GM12878 (cell line): ENCODE measurements at regions of chr19 and their contacts with region 1.

Region 1: DNA sequence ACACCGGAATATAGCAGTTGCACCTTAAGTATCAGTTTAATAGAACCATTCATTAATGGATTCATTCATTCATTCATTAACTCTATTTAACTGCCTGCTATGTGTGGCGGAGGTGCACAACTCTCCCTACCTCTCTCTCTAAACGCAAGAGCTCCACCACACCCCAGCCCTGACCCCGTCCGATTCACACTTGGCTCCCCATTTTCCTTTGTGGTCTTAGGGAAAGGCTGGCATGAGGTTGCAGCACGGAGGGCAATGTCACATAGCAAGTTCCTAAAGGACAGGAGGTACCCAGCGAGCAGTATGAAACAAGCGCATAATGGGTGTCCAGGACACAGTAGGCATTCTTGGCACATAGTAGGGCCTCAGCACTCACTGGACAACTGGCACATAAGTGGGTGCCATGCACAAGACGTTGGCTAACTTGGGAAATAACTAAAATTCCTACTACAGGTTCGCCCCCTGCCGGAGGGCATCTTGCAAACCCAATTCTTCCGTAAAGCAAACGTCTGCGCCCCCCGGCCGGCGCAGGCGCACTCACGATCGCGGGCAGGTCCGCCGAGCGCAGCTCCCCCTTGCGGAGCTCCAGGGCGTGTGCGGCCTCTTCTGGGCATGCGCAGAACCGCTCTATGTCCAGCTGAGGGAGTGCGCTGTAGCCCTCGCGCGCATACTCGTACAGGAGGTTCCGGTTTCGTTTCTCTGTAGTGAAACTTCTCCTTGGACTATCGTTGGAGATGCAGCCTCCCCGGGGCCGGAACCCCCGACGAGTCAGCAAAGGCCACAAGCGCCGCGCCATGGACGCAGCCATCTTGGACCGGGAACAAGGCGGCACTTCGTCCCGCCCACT is at the start of gene SARS2:
- DNase-seq: peak; percentile 79
- ATAC-seq: peak; percentile 72
- H3K4me3 ChIP-seq: peak within 1 kb of the TSS; percentile 98
- H3K27ac ChIP-seq: peak within 1 kb of the TSS; percentile 97
- H3K4me1 ChIP-seq: peaks cover 6% of the 10 kb centered on the region
- H3K27me3 ChIP-seq: no peaks in the 10 kb centered on the region
- CTCF ChIP-seq: peak; percentile 98 to 100 (median 99); a peak in 5 of 6 replicates
- EP300 ChIP-seq: peak in 1 of 2 experiments; percentile 27; a peak in 1 of 4 replicates
- POLR2A ChIP-seq: peak; percentile 86
- RAD21 ChIP-seq: peak; percentile 58
- polyA plus RNA-seq, gene SARS2: 2.6 to 7.8 TPM

Region 2: GRCh38 chr19:38544034-38544958 is 385.9 kb before region 1 on chr19:
- CTCF ChIA-PET with region 1: interaction called, 8 read pairs
- POLR2A ChIA-PET with region 1: interaction called, 4 read pairs
- RAD21 ChIA-PET with region 1: interaction called, 3 read pairs
- SMC1A ChIA-PET with region 1: interaction called, 12 read pairs
- in situ Hi-C with region 1: no loop called
- intact Hi-C with region 1: no loop called
- DNase-seq: peak; percentile 64
- ATAC-seq: peak; percentile 93
- H3K4me3 ChIP-seq: peak overlapping the region; percentile 25; the same call in 1 of the 2 replicates
- H3K27ac ChIP-seq: no peak overlapping the region
- H3K4me1 ChIP-seq: peaks cover 9% of the 10 kb centered on the region; the same call in 1 of the 2 replicates
- H3K27me3 ChIP-seq: no peaks in the 10 kb centered on the region
- CTCF ChIP-seq: peak; percentile 52 to 81 (median 69); a peak in 5 of 6 replicates
- EP300 ChIP-seq: no peak
- POLR2A ChIP-seq: no peak
- RAD21 ChIP-seq: peak; percentile 91

Region 3: GRCh38 chr19:38634757-38635482 is 295.2 kb before region 1 on chr19:
- CTCF ChIA-PET with region 1: interaction called, 26 read pairs
- POLR2A ChIA-PET with region 1: no interaction called
- RAD21 ChIA-PET with region 1: interaction called, 8 read pairs
- SMC1A ChIA-PET with region 1: interaction called, 7 read pairs
- in situ Hi-C with region 1: no loop called
- intact Hi-C with region 1: loop called (anchors 2 kb)
- DNase-seq: peak; percentile 32
- ATAC-seq: peak; percentile 73
- H3K4me3 ChIP-seq: no peak overlapping the region
- H3K27ac ChIP-seq: no peak overlapping the region; the same call in 1 of the 2 replicates
- H3K4me1 ChIP-seq: peaks cover 15% of the 10 kb centered on the region
- H3K27me3 ChIP-seq: no peaks in the 10 kb centered on the region
- CTCF ChIP-seq: peak; percentile 86 to 91 (median 88)
- EP300 ChIP-seq: no peak
- POLR2A ChIP-seq: 0 out of 2 replicates have a peak, but pooled peaks have one; percentile 27
- RAD21 ChIP-seq: peak; percentile 83

Region 4: DNA sequence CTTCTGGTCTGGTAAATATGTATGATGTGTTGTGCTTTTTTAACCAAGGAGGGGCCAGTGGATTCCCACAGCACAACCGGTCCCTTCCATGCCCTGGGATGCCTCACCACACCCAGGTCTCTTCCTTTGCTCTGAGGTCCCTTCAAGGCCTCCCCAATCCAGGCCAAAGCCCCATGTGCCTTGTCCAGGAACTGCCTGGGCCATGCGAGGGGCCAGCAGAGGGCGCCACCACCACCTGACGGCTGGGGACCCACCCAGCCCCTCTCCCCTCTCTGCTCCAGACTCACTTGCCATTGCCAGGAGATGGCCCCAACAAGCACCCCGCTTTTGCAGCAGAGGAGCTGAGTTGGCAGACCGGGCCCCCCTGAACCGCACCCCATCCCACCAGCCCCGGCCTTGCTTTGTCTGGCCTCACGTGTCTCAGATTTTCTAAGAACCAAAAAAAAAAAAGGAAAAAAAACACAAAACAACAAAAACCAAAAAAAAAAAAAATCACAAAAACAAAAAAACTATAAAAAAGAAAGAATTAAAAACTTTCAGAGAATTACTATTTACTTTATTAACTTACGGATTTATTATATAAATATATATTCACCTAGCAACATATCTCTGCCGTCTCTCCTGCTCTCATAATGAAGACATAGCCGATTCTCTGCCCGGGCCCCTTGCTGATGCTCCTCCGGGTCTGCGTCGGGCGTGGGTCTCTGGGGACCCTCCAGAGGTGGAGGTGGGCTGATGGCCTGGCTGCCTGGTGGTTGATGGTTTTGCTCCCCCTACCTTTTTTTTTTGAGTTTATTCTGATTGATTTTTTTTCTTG is 200.3 kb before region 1 on chr19:
- CTCF ChIA-PET with region 1: interaction called, 20 read pairs
- POLR2A ChIA-PET with region 1: interaction called, 5 read pairs
- RAD21 ChIA-PET with region 1: interaction called, 11 read pairs
- SMC1A ChIA-PET with region 1: interaction called, 4 read pairs
- in situ Hi-C with region 1: loop called (anchors 5 kb)
- intact Hi-C with region 1: loop called (anchors 1 kb)
- DNase-seq: no peak
- ATAC-seq: peak; percentile 92
- H3K4me3 ChIP-seq: no peak overlapping the region
- H3K27ac ChIP-seq: no peak overlapping the region
- H3K4me1 ChIP-seq: peaks cover 15% of the 10 kb centered on the region
- H3K27me3 ChIP-seq: no peaks in the 10 kb centered on the region
- CTCF ChIP-seq: peak; percentile 71 to 97 (median 79)
- EP300 ChIP-seq: no peak
- POLR2A ChIP-seq: no peak
- RAD21 ChIP-seq: peak; percentile 67

Region 5: GRCh38 chr19:38795549-38795948 is 134.6 kb before region 1 on chr19:
- CTCF ChIA-PET with region 1: no interaction called
- POLR2A ChIA-PET with region 1: no interaction called
- RAD21 ChIA-PET with region 1: no interaction called
- SMC1A ChIA-PET with region 1: no interaction called
- in situ Hi-C with region 1: no loop called
- intact Hi-C with region 1: no loop called
- DNase-seq: no peak
- ATAC-seq: no peak
- H3K4me3 ChIP-seq: no peak overlapping the region
- H3K27ac ChIP-seq: no peak overlapping the region
- H3K4me1 ChIP-seq: no peaks in the 10 kb centered on the region
- H3K27me3 ChIP-seq: no peaks in the 10 kb centered on the region
- CTCF ChIP-seq: no peak
- EP300 ChIP-seq: no peak
- POLR2A ChIP-seq: no peak
- RAD21 ChIP-seq: no peak

Region 6: GRCh38 chr19:38869856-38870607 is 60.1 kb before region 1 on chr19:
- CTCF ChIA-PET with region 1: interaction called, 7 read pairs
- POLR2A ChIA-PET with region 1: interaction called, 3 read pairs
- RAD21 ChIA-PET with region 1: interaction called, 5 read pairs
- SMC1A ChIA-PET with region 1: interaction called, 4 read pairs
- in situ Hi-C with region 1: no loop called
- intact Hi-C with region 1: loop called (anchors 5 kb)
- DNase-seq: no peak
- ATAC-seq: peak; percentile 92
- H3K4me3 ChIP-seq: peak overlapping the region; percentile 52; the same call in 1 of the 2 replicates
- H3K27ac ChIP-seq: peak overlapping the region; percentile 46; the same call in 1 of the 2 replicates
- H3K4me1 ChIP-seq: peaks cover 23% of the 10 kb centered on the region
- H3K27me3 ChIP-seq: no peaks in the 10 kb centered on the region
- CTCF ChIP-seq: peak; percentile 90 to 95 (median 94); a peak in 5 of 6 replicates
- EP300 ChIP-seq: no peak
- POLR2A ChIP-seq: peak; percentile 46
- RAD21 ChIP-seq: peak; percentile 78

Region 7: GRCh38 chr19:38891771-38892170 is 38.4 kb before region 1 on chr19:
- CTCF ChIA-PET with region 1: interaction called, 25 read pairs
- POLR2A ChIA-PET with region 1: interaction called, 6 read pairs
- RAD21 ChIA-PET with region 1: no interaction called
- SMC1A ChIA-PET with region 1: interaction called, 7 read pairs
- in situ Hi-C with region 1: no loop called
- intact Hi-C with region 1: no loop called
- DNase-seq: no peak
- ATAC-seq: no peak
- H3K4me3 ChIP-seq: no peak overlapping the region
- H3K27ac ChIP-seq: no peak overlapping the region
- H3K4me1 ChIP-seq: no peaks in the 10 kb centered on the region
- H3K27me3 ChIP-seq: no peaks in the 10 kb centered on the region
- CTCF ChIP-seq: no peak
- EP300 ChIP-seq: no peak
- POLR2A ChIP-seq: no peak
- RAD21 ChIP-seq: no peak

Region 8: DNA sequence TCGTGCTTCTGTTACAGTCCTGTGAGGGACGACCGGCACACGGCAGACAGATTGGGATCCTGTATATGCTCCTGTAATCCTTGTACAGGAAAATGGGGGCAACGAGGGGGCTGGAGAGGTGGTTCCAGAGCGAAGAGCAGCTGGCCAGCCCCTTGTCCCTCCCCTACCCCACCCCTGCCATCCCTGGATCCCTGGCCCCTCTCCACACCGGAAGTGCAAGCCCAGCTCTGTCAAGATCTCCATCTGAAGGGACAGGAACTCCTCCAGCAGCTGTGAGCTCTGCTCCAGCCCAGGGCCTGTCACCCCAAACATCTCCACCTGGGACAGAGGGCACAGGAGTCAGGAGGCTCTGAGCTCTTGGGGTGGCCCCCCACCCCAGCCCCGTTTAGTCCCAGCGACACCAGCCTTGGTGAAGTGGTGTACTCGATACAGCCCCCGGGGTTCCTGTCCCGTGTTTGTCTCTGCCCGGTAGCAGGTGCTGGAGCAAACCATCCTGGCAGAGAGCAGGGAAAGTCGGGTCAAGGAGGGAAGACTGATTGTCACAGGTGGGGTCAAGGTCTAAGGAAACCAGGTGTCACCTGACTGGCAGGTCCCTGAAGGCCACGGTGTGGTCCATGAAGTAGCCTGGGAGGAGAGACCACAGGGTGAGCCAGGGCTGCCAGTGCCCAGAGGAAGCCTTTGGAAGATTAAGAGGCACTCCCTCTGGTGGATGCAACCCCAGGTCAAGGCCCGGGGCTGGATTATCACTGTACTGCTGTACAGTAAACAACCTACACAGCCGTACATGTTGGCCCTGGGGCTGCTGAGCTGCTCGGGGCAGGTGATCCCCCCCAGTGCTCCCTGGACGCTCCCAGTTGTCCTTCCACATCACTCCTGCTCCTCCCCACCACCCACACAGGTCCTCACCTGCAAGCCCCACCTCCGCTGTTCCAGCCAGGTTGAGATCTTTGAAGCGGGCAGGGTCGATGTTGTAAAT is 12.3 kb before region 1 on chr19:
- CTCF ChIA-PET with region 1: interaction called, 14 read pairs
- POLR2A ChIA-PET with region 1: no interaction called
- RAD21 ChIA-PET with region 1: no interaction called
- SMC1A ChIA-PET with region 1: interaction called, 3 read pairs
- in situ Hi-C with region 1: no loop called
- intact Hi-C with region 1: no loop called
- DNase-seq: no peak
- ATAC-seq: 0 out of 3 replicates have a peak, but pooled peaks have one; percentile 35
- H3K4me3 ChIP-seq: no peak overlapping the region
- H3K27ac ChIP-seq: no peak overlapping the region
- H3K4me1 ChIP-seq: no peaks in the 10 kb centered on the region
- H3K27me3 ChIP-seq: no peaks in the 10 kb centered on the region
- CTCF ChIP-seq: no peak
- EP300 ChIP-seq: no peak
- POLR2A ChIP-seq: no peak
- RAD21 ChIP-seq: no peak